AG04449 (cell line): ENCODE measurements at regions of chr17 and their contacts with region 1.

Region 1: DNA sequence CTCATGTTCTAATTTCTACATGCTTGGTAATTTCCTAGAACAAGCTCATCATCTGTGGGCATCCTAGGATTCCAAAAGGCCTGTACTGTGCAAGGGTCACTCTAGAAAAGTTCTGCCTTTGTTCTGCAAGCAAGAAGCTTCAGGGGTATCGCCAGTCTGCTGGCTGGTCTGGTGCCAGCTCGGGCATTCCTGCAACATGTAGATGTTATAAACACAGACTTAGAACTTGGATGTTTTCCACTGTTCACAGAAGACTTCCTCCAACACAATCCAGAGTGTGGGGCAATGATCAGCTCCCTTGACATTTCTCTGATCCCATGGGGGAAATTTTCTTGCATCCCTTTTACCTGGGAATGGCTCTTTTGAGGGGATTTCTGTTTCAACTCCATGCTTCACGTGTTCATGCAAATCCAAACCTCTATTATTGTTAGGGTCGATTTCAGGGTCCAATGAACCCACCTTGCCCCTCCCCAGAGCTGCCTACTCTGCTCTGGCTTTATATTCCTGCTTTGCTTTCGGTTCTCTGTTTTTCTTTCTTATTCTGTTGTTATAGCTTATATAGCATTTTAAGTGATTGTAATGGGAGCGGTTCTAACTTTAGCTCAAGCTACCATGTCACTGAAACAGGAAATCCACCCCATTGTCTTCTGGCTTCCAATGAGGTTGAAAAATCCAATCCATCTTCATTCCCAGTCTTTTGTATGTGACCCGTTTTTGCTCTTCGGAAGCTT is 25.3 kb downstream of the UBE2O start:
- DNase-seq: no peak
- H3K4me3 ChIP-seq: no peak overlapping the region
- CTCF ChIP-seq: no peak

Region 2: GRCh38 chr17:76414334-76415295 is 13.1 kb before region 1 on chr17:
- CTCF ChIA-PET with region 1: interaction called, 11 read pairs
- POLR2A ChIA-PET with region 1: no interaction called
- DNase-seq: no peak
- H3K4me3 ChIP-seq: no peak overlapping the region
- CTCF ChIP-seq: no peak